Right lobe of liver (tissue), 6 donors: ENCODE measurements at regions of chrX and their contacts with region 1.

Region 1: GRCh38 chrX:115642895-115643530 is 82.0 kb downstream of the PLS3 start:
- DNase-seq: no peak
- ATAC-seq: peak; percentile 66 to 91 (median 74)
- H3K4me3 ChIP-seq: no peak overlapping the region
- H3K27ac ChIP-seq: peak overlapping the region in 1 of 3 donors; percentile 41
- H3K4me1 ChIP-seq: no peaks in the 10 kb centered on the region
- H3K27me3 ChIP-seq: no peaks in the 10 kb centered on the region
- CTCF ChIP-seq: peak; percentile 96 to 98 (median 98)
- POLR2A ChIP-seq: no peak

Region 2: GRCh38 chrX:115330498-115331168 is 312.4 kb before region 1 on chrX:
- intact Hi-C with region 1: loop called in 1 of 2 experiments (anchors 10 kb)
- DNase-seq: peak in 1 of 3 donors; percentile 45
- ATAC-seq: peak; percentile 76 to 89 (median 82)
- H3K4me3 ChIP-seq: no peak overlapping the region
- H3K27ac ChIP-seq: no peak overlapping the region
- H3K4me1 ChIP-seq: no peaks in the 10 kb centered on the region
- H3K27me3 ChIP-seq: peaks cover 0 to 7% of the 10 kb centered on the region in 2 donors
- CTCF ChIP-seq: peak; percentile 87 to 90 (median 88)
- POLR2A ChIP-seq: no peak